HEK293 (cell line): ENCODE measurements at regions of chr3 and their contacts with region 1.

Region 1: DNA sequence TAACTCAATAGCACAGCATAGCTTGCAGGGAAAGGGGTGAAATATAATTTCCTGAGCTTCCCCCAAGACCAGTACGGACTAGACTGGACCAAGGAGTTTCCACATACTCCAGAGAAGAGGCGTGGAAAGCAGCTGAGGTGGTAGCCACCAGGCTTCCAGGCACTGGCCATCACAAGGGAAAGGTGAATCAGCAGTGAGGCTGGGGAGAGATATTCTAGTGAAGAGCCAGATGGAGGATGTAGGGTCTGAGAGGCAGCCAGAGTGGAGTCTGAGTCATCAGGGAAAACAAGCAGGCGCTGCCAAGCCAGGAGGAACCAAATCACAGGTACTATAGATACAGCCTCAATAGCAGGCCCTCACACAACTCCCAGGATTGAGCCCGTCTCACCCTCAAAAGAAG is 9.6 kb upstream of the RASA2 start:
- H3K4me3 ChIP-seq: no peak overlapping the region
- H3K27ac ChIP-seq: no peak overlapping the region
- H3K4me1 ChIP-seq: no peaks in the 10 kb centered on the region
- CTCF ChIP-seq: no peak

Region 2: GRCh38 chr3:141412936-141413354 is 64.3 kb before region 1 on chr3:
- CTCF ChIA-PET with region 1: no interaction called
- POLR2A ChIA-PET with region 1: no interaction called
- H3K4me3 ChIP-seq: no peak overlapping the region
- H3K27ac ChIP-seq: peak overlapping the region; percentile 18; the same call in 1 of the 2 replicates
- H3K4me1 ChIP-seq: peaks cover 18% of the 10 kb centered on the region
- CTCF ChIP-seq: no peak

Region 3: GRCh38 chr3:141561426-141562034 is 84.3 kb after region 1 on chr3:
- CTCF ChIA-PET with region 1: interaction called, 10 read pairs
- POLR2A ChIA-PET with region 1: no interaction called
- H3K4me3 ChIP-seq: no peak overlapping the region
- H3K27ac ChIP-seq: no peak overlapping the region
- H3K4me1 ChIP-seq: peaks cover 3% of the 10 kb centered on the region; the same call in 1 of the 2 replicates
- CTCF ChIP-seq: 0 out of 2 replicates have a peak, but pooled peaks have one; percentile 24

Region 4: DNA sequence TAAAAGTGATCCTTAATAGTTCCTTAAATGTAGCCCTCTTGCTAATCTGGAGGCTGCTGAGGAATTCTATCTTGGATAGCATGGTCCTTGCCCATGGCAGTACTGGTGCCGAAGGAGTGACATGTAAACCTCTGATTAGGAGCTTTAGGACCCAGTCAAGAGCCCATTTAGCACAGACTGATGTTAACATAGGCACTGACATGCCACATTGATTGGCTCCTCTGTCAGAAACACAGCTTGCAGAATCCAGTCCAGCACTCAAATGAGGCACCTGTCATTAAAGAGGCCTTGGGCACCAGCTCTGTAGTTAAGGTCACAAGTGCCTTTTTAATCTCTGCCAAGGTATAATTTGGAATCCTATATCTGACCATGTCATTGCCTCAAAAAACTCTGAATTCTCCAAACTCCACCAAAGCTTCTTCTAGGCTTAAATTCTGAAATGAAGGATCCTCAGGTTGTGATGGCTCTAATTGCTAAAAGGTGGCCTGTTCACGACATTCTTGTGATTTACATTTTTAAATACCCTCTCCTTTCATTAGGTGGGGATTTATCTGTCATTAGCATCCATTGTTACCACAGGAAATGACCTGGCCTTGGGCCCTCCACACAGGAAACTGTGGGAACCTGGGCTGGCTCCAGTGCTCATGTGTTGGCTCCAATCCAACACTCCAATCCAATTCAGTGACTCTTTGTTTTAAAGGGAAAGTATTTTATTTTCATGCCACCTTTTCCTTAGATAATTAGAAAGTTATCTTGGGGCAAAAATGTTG is 203.6 kb after region 1 on chr3:
- CTCF ChIA-PET with region 1: no interaction called
- POLR2A ChIA-PET with region 1: no interaction called
- H3K4me3 ChIP-seq: no peak overlapping the region
- H3K27ac ChIP-seq: no peak overlapping the region
- H3K4me1 ChIP-seq: peaks cover 3% of the 10 kb centered on the region; the same call in 1 of the 2 replicates
- CTCF ChIP-seq: no peak